HepG2 (cell line): ENCODE measurements at regions of chr1 and their contacts with region 1.

Region 1: DNA sequence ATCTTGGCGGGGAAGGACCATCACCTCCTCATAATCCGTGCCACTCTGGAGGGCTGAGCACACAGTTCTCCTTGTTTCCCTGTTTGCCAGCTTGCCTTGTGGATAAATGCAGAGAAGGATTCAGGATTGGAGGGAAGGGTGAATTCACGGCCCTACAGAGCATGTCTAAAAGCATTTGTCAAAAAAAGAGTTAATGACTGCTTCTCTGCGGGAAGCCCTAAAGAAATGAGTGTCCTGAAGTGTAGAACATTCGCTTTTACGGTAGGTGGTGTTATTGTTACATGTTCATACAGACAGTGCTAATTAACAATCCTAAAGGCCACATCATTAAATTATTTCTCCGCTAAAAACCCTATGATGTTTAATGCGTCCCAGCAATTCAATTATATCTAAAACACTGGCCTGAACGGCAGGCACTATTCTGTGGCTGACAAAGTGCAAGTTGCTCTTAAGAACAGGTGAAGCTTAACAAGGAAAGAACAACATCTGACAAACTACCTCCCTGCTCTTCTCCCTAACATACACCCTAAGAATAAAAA is 112.3 kb upstream of the NFIA start:
- DNase-seq: peak; percentile 24
- ATAC-seq: peak; percentile 70
- H3K4me3 ChIP-seq: no peak overlapping the region
- H3K27ac ChIP-seq: no peak overlapping the region
- H3K4me1 ChIP-seq: peaks cover 32% of the 10 kb centered on the region
- H3K27me3 ChIP-seq: peaks cover 1 to 4% of the 10 kb centered on the region in 2 experiments; a peak in 1 of 5 replicates
- CTCF ChIP-seq: peak; percentile 58
- EP300 ChIP-seq: no peak
- POLR2A ChIP-seq: no peak
- RAD21 ChIP-seq: peak; percentile 56

Region 2: GRCh38 chr1:59947047-59947938 is 1022.7 kb before region 1 on chr1:
- CTCF ChIA-PET with region 1: no interaction called
- POLR2A ChIA-PET with region 1: no interaction called
- in situ Hi-C with region 1: no loop called
- intact Hi-C with region 1: no loop called
- DNase-seq: peak; percentile 58
- ATAC-seq: peak; percentile 95
- H3K4me3 ChIP-seq: no peak overlapping the region
- H3K27ac ChIP-seq: no peak overlapping the region
- H3K4me1 ChIP-seq: peaks cover 18% of the 10 kb centered on the region
- H3K27me3 ChIP-seq: no peaks in the 10 kb centered on the region
- CTCF ChIP-seq: peak; percentile 96
- EP300 ChIP-seq: no peak
- POLR2A ChIP-seq: no peak
- RAD21 ChIP-seq: peak; percentile 94

Region 3: GRCh38 chr1:60470246-60470645 is 499.8 kb before region 1 on chr1:
- CTCF ChIA-PET with region 1: no interaction called
- POLR2A ChIA-PET with region 1: no interaction called
- in situ Hi-C with region 1: no loop called
- intact Hi-C with region 1: no loop called
- DNase-seq: no peak
- ATAC-seq: no peak
- H3K4me3 ChIP-seq: no peak overlapping the region
- H3K27ac ChIP-seq: no peak overlapping the region
- H3K4me1 ChIP-seq: no peaks in the 10 kb centered on the region
- H3K27me3 ChIP-seq: no peaks in the 10 kb centered on the region; a peak in 1 of 5 replicates
- CTCF ChIP-seq: no peak
- EP300 ChIP-seq: no peak
- POLR2A ChIP-seq: no peak
- RAD21 ChIP-seq: no peak

Region 4: GRCh38 chr1:60989749-60990713 is 20.0 kb after region 1 on chr1:
- CTCF ChIA-PET with region 1: no interaction called
- POLR2A ChIA-PET with region 1: no interaction called
- in situ Hi-C with region 1: no loop called
- intact Hi-C with region 1: no loop called
- DNase-seq: no peak
- ATAC-seq: no peak
- H3K4me3 ChIP-seq: no peak overlapping the region
- H3K27ac ChIP-seq: no peak overlapping the region
- H3K4me1 ChIP-seq: no peaks in the 10 kb centered on the region
- H3K27me3 ChIP-seq: peaks cover 0 to 2% of the 10 kb centered on the region in 2 experiments; a peak in 2 of 5 replicates
- CTCF ChIP-seq: no peak
- EP300 ChIP-seq: no peak
- POLR2A ChIP-seq: no peak
- RAD21 ChIP-seq: no peak

Region 5: DNA sequence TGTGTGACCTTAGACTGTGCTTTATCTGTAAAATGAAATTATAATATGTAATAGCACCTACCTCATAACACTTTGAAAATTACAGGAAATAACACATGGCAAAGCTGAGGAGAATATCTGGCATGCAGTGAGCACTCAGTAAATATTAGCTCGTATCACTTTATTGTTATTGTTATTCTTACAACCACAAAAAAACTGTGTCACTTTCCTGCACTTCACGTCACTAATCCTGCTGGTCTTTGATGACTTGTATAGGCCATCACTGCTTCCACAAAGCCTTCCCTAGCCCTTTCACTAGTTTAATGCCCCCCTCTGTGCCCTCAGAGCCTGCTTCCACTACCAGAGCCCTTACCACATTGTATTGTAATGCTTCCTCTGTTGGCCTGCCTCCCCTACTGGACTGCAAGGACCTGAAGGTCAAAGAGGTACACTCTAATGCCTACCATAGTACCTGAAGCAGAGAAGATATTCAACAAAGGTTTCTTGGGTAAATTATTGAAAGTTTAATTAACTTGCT is 343.9 kb after region 1 on chr1:
- CTCF ChIA-PET with region 1: no interaction called
- POLR2A ChIA-PET with region 1: no interaction called
- in situ Hi-C with region 1: no loop called
- intact Hi-C with region 1: no loop called
- DNase-seq: no peak
- ATAC-seq: no peak
- H3K4me3 ChIP-seq: no peak overlapping the region
- H3K27ac ChIP-seq: no peak overlapping the region
- H3K4me1 ChIP-seq: peaks cover 3% of the 10 kb centered on the region
- H3K27me3 ChIP-seq: no peaks in the 10 kb centered on the region
- CTCF ChIP-seq: no peak
- EP300 ChIP-seq: no peak
- POLR2A ChIP-seq: no peak
- RAD21 ChIP-seq: no peak

Region 6: GRCh38 chr1:61588736-61589672 is 619.0 kb after region 1 on chr1:
- CTCF ChIA-PET with region 1: interaction called, 3 read pairs
- POLR2A ChIA-PET with region 1: no interaction called
- in situ Hi-C with region 1: no loop called
- intact Hi-C with region 1: loop called (anchors 2 kb)
- DNase-seq: peak; percentile 62
- ATAC-seq: peak; percentile 99
- H3K4me3 ChIP-seq: no peak overlapping the region
- H3K27ac ChIP-seq: no peak overlapping the region
- H3K4me1 ChIP-seq: no peaks in the 10 kb centered on the region
- H3K27me3 ChIP-seq: peaks cover 0 to 10% of the 10 kb centered on the region in 2 experiments; a peak in 4 of 5 replicates
- CTCF ChIP-seq: peak; percentile 89
- EP300 ChIP-seq: no peak
- POLR2A ChIP-seq: no peak
- RAD21 ChIP-seq: peak; percentile 54

Region 7: DNA sequence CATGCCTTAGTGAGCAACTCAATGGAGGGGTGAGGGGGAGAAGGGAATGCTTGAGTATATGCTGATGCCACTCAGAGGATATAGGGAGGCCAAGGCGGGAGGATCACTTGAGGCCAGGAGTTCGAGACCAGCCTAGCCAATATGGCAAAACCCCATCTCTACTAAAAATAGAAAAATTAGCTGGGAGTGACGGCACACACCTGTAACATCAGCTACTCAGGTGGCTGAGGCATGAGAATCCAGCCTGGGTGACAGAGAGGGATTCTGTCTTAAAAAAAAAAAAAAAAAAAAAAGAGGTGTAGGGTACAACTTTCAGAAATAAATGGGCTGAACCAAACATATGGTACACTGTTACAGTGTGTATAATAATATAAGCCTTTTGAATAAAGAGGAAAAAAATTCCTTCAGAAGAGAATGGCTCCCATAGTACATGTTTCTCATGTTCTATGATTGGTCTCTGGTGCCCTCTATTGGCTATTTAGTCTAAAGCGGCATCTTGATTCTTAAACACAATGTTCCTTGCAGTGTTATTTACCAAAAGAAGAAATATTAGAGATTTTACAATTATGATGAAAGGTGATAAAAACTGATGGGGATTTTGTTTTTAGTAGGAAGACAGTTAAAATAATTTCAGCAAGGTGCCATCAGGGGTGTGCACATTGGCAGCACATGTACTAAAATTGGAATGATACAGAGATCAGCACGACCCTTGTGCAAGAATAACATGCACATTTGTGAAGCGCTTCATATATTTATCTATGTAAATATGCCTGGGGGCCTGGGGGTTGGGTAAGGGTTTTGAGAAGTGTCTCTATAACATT is 882.0 kb after region 1 on chr1:
- CTCF ChIA-PET with region 1: no interaction called
- POLR2A ChIA-PET with region 1: no interaction called
- in situ Hi-C with region 1: loop called (anchors 10 kb)
- intact Hi-C with region 1: loop called (anchors 5 kb)
- DNase-seq: peak; percentile 47
- ATAC-seq: peak; percentile 65
- H3K4me3 ChIP-seq: no peak overlapping the region
- H3K27ac ChIP-seq: no peak overlapping the region
- H3K4me1 ChIP-seq: no peaks in the 10 kb centered on the region
- H3K27me3 ChIP-seq: no peaks in the 10 kb centered on the region
- CTCF ChIP-seq: peak; percentile 66
- EP300 ChIP-seq: no peak
- POLR2A ChIP-seq: no peak
- RAD21 ChIP-seq: peak; percentile 16; the same call in 1 of the 2 replicates